Naive thymus-derived CD4-positive, alpha-beta T cell (primary cell): ENCODE measurements at regions of chr5 and their contacts with region 1.

Region 1: DNA sequence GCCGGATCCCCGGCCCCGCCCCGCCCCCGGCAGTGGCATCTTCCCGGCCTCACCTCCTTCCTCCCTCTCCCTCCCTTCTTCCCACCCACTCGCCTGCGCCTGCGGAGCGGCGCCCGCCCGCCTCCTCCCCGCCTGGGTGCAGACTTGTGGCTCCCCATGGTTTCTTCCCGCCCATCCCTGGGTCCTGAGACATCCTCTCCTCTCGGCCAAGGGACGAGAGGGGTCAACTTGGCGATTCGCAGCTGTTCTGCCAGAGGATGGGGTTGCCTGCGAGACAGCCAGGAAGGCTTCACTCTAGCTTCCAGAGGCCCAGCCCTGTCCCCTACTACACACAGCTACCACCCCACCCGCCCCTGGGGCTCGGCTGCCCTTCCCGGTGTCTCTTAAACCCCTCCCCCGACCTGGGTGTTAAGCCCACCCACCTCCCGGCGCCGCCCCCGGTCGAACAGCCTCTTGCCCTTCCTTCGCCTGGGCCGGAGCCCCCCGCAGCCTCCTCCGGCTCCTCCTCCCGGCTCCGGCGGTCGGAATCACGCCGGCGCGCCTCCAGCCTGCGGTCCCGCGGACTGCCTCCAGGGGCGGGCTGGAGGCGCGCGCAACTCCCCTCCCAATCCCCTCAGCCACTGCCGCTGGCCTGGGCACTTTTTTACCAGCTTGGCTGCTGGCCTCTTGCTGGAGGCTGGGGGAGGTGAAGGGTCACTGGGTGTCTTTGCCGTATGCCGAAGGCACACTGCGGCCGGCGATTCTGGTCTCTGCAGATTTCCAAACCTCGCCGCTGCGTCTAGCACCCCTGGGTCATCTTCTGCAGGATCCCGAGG is 1.9 kb downstream of the JADE2 start:
- DNase-seq: peak; percentile 34 to 82 (median 60)
- ATAC-seq: peak; percentile 45
- H3K4me3 ChIP-seq: peak overlapping the region; percentile 100
- H3K4me3 Mint-ChIP-seq: peak overlapping the region; percentile 91 to 100 (median 98)
- H3K27ac ChIP-seq: peak overlapping the region; percentile 97
- H3K27ac Mint-ChIP-seq: peak overlapping the region; percentile 48 to 99 (median 93)
- H3K4me1 ChIP-seq: peaks cover 43 to 50% of the 10 kb centered on the region in 2 donors
- H3K4me1 Mint-ChIP-seq: peaks cover 37 to 57% (median 52%) of the 10 kb centered on the region in 7 donors
- H3K27me3 ChIP-seq: no peaks in the 10 kb centered on the region
- H3K27me3 Mint-ChIP-seq: no peaks in the 10 kb centered on the region

Region 2: DNA sequence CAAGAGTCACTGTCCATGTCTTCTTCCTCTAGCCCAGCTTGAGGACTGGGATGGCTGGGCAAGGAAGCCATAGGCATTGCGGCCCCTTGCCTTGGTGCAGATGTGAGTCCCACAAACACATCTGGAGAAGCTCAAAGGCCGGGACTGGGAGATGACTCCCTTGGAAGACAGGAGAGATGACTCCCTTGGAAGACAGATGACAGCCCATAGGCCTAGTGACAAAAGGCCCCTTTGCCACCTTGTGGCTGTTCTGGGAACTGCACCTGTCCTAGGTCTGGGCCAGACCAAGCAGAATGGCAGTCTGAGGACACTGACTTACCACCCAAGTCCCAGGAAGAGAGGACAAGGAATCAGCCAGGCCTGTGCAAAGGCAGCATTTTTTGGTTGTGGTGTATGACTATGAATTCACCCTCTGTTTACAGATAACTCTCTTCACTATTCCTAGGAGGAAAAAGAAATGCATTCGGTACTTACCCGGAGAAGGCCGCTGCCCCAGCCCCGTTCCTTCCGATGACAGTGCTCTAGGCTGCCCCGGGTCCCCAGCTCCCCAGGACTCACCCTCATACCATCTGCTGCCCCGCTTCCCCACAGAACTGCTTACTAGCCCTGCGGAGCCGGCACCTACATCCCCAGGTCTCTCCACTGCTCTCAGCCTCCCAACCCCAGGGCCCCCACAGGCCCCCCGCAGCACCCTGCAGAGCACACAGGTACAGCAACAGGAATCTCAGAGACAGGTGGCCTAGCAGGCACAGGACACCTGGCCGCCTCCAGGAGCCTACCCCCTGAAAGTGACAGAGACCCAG is 381.4 kb before region 1 on chr5:
- CTCF ChIA-PET with region 1: no interaction called
- POLR2A ChIA-PET with region 1: no interaction called
- intact Hi-C with region 1: no loop called
- DNase-seq: peak; percentile 64 to 87 (median 77)
- ATAC-seq: peak; percentile 84
- H3K4me3 ChIP-seq: no peak overlapping the region
- H3K4me3 Mint-ChIP-seq: peak overlapping the region in 4 of 10 donors; percentile 18 to 54 (median 27)
- H3K27ac ChIP-seq: peak overlapping the region; percentile 63
- H3K27ac Mint-ChIP-seq: peak overlapping the region in 8 of 9 donors; percentile 75 to 93 (median 90)
- H3K4me1 ChIP-seq: peaks cover 5 to 29% of the 10 kb centered on the region in 2 donors
- H3K4me1 Mint-ChIP-seq: peaks cover 21 to 67% (median 46%) of the 10 kb centered on the region in 7 donors
- H3K27me3 ChIP-seq: no peaks in the 10 kb centered on the region
- H3K27me3 Mint-ChIP-seq: no peaks in the 10 kb centered on the region

Region 3: GRCh38 chr5:134225618-134226440 is 301.5 kb before region 1 on chr5 and contains the start of gene PPP2CA:
- CTCF ChIA-PET with region 1: no interaction called
- POLR2A ChIA-PET with region 1: interaction called, 13 read pairs
- intact Hi-C with region 1: loop called (anchors 1 kb)
- DNase-seq: peak; percentile 98 to 100 (median 99)
- ATAC-seq: peak; percentile 89
- H3K4me3 ChIP-seq: peak within 1 kb of the TSS; percentile 100
- H3K4me3 Mint-ChIP-seq: peak within 1 kb of the TSS; percentile 66 to 98 (median 96)
- H3K27ac ChIP-seq: peak within 1 kb of the TSS; percentile 100
- H3K27ac Mint-ChIP-seq: peak within 1 kb of the TSS; percentile 95 to 100 (median 98)
- H3K4me1 ChIP-seq: peaks cover 29 to 40% of the 10 kb centered on the region in 2 donors
- H3K4me1 Mint-ChIP-seq: peaks cover 37 to 58% (median 52%) of the 10 kb centered on the region in 7 donors
- H3K27me3 ChIP-seq: no peaks in the 10 kb centered on the region
- H3K27me3 Mint-ChIP-seq: peaks cover 0 to 4% (median 0%) of the 10 kb centered on the region in 5 donors
- total RNA-seq, gene PPP2CA: 89.5 to 168 (median 132) TPM

Region 4: GRCh38 chr5:134249469-134250379 is 277.6 kb before region 1 on chr5:
- CTCF ChIA-PET with region 1: no interaction called
- POLR2A ChIA-PET with region 1: no interaction called
- intact Hi-C with region 1: no loop called
- DNase-seq: no peak
- ATAC-seq: peak; percentile 86
- H3K4me3 ChIP-seq: no peak overlapping the region
- H3K4me3 Mint-ChIP-seq: no peak overlapping the region
- H3K27ac ChIP-seq: no peak overlapping the region
- H3K27ac Mint-ChIP-seq: no peak overlapping the region
- H3K4me1 ChIP-seq: no peaks in the 10 kb centered on the region
- H3K4me1 Mint-ChIP-seq: peaks cover 0 to 7% (median 0%) of the 10 kb centered on the region in 7 donors
- H3K27me3 ChIP-seq: no peaks in the 10 kb centered on the region
- H3K27me3 Mint-ChIP-seq: peaks cover 0 to 13% (median 4%) of the 10 kb centered on the region in 5 donors

Region 5: DNA sequence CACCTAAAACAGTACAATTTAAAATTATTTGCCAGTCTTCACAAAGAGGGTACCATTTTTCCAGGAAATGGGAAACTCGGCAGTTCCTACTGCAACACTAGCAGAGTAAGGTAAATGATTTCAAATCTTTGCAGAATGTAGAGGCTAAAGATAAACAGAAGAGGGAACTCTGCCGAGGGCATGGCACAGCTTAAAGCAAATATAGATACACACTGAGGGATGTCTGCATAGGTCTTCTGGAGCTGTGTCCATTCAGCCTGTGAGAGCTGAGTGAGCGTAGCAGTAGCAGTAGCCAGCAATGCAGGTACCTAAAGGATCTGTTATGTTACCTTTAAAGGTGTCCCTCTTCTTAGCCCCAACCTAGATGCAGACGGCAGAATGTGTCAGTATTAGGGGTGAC is 177.9 kb before region 1 on chr5:
- CTCF ChIA-PET with region 1: no interaction called
- POLR2A ChIA-PET with region 1: no interaction called
- intact Hi-C with region 1: no loop called
- DNase-seq: no peak
- ATAC-seq: no peak
- H3K4me3 ChIP-seq: no peak overlapping the region
- H3K4me3 Mint-ChIP-seq: no peak overlapping the region
- H3K27ac ChIP-seq: no peak overlapping the region
- H3K27ac Mint-ChIP-seq: no peak overlapping the region
- H3K4me1 ChIP-seq: no peaks in the 10 kb centered on the region
- H3K4me1 Mint-ChIP-seq: peaks cover 0 to 2% (median 0%) of the 10 kb centered on the region in 7 donors
- H3K27me3 ChIP-seq: no peaks in the 10 kb centered on the region
- H3K27me3 Mint-ChIP-seq: no peaks in the 10 kb centered on the region

Region 6: DNA sequence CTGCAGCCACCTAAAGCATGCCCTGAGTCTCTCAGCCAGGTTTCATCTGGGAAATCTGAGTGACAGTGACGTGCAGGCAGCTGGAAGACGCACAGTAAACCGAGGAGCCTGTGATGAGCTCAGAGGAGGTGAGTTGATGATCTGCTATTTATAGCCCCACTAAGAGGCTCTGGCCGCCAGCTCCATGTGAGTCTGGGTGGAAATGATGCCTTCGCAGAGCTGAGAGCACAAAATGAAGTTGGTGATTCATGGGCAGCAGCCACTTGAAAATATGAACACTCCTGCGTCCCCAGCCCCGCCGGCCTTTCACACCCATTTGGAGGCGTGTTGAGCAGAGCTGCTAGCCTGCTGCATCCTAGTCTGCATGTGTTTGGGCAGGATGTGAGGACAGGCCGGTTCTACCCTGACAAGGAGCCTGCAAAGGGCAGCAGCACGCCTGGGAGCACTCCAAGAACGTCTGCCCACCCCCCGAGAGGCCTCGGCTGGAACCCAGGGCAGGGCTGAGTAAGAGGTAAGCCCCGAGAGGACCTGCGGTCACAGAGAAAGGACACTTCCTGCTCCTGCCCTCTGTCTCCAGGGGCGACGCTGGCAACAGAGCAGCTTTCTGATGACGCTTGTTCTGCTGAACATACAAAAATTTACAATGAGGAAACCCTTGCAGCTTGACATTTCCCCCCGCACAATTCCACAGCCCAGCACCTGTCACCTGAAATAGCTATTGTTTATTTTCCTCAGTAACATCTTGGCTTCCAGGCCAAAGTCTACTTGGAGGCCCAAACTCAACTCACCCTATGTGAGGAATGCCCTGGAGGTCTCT is 90.6 kb before region 1 on chr5:
- CTCF ChIA-PET with region 1: no interaction called
- POLR2A ChIA-PET with region 1: interaction called, 5 read pairs
- intact Hi-C with region 1: loop called (anchors 1 kb)
- DNase-seq: peak; percentile 29 to 65 (median 50)
- ATAC-seq: peak; percentile 92
- H3K4me3 ChIP-seq: peak overlapping the region; percentile 24
- H3K4me3 Mint-ChIP-seq: peak overlapping the region in 9 of 10 donors; percentile 20 to 65 (median 51)
- H3K27ac ChIP-seq: no peak overlapping the region
- H3K27ac Mint-ChIP-seq: peak overlapping the region; percentile 47 to 85 (median 74)
- H3K4me1 ChIP-seq: peaks cover 0 to 11% of the 10 kb centered on the region in 2 donors
- H3K4me1 Mint-ChIP-seq: peaks cover 0 to 31% (median 14%) of the 10 kb centered on the region in 7 donors
- H3K27me3 ChIP-seq: no peaks in the 10 kb centered on the region
- H3K27me3 Mint-ChIP-seq: no peaks in the 10 kb centered on the region

Region 7: DNA sequence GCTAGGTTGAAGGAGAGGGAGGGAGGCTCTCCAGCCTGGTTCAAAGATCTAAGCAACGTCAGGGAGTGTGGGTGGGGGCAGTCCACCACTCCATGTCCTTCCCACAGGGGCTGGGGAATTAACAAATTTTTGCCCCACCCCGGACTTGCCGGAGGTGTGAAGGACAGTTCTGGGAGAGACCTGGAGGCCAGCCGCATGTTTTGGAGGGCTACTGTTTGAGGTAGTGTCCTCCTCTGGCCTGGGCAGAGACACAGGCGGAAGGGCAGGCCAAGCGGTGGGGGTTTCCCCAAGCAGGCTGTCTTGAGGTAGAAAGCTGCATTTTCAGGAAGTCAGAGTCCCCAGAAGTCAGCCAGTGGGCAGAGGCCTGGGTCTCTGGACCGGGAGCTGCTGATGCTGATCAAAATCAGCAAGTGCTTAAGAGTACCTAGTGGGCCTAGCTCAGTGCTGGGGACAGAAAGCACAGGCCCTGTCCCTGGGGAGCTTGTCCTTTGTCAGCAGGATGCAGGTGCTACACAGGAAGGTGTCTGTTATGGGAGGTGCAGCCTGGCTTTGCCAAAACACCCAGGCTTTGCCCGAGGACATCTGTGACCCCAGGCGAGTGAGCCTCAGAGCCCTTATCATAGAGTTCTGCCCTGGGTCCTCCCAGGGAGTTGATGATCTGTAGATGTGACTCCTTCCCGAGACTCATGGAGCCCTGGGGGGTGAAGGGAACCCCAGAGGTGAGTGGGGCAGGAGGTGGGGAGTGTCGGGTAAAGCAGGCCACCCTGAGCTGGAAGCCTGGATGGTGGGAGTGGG is 16.7 kb after region 1 on chr5:
- CTCF ChIA-PET with region 1: interaction called, 8 read pairs
- POLR2A ChIA-PET with region 1: interaction called, 11 read pairs
- intact Hi-C with region 1: loop called (anchors 1 kb)
- DNase-seq: peak in 2 of 9 donors; percentile 12 to 61
- ATAC-seq: peak; percentile 80
- H3K4me3 ChIP-seq: no peak overlapping the region
- H3K4me3 Mint-ChIP-seq: peak overlapping the region; percentile 19 to 80 (median 70)
- H3K27ac ChIP-seq: peak overlapping the region; percentile 62
- H3K27ac Mint-ChIP-seq: peak overlapping the region; percentile 73 to 93 (median 86)
- H3K4me1 ChIP-seq: peaks cover 30 to 38% of the 10 kb centered on the region in 2 donors
- H3K4me1 Mint-ChIP-seq: peaks cover 26 to 68% (median 53%) of the 10 kb centered on the region in 7 donors
- H3K27me3 ChIP-seq: no peaks in the 10 kb centered on the region
- H3K27me3 Mint-ChIP-seq: no peaks in the 10 kb centered on the region

Region 8: DNA sequence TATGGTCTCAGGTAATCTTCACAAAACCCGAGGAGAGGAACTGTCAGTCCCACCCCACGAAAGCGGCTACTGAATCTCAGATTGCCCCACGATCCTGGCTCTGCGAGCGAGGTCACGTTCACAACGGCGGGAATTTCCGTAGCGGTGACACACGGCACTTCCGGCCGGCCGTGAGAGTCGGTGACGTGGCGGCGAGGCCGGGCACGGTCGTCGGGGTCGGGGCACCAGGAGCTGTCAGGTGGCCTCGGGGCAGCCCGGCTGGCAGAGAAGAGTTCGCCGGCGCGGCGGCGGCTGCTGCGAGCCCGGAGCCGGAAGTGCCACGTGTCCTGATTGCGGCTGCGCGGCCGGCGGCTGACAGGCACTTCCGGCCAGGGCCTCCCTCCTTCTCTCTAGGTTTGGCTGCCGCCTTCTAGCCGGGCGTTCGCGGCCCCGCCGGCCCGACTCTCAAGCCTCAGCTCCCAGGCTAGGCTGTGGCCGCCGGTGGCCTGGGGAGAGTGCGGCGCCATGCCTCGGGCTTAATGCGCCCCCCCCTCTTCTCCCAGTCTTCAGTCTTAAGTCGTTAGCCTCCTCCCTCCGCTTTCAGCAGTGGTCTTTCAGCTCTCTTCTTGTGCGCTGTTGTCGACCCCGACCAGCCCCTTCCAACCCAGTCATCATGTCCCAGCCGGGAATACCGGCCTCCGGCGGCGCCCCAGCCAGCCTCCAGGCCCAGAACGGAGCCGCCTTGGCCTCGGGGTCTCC is 121.2 kb after region 1 on chr5 and contains the start of gene SEC24A:
- CTCF ChIA-PET with region 1: no interaction called
- POLR2A ChIA-PET with region 1: no interaction called
- intact Hi-C with region 1: loop called (anchors 1 kb)
- DNase-seq: peak; percentile 83 to 93 (median 86)
- ATAC-seq: peak; percentile 92
- H3K4me3 ChIP-seq: peak within 1 kb of the TSS; percentile 76
- H3K4me3 Mint-ChIP-seq: peak within 1 kb of the TSS; percentile 89 to 100 (median 98)
- H3K27ac ChIP-seq: peak within 1 kb of the TSS; percentile 91
- H3K27ac Mint-ChIP-seq: peak within 1 kb of the TSS; percentile 94 to 100 (median 99)
- H3K4me1 ChIP-seq: peaks cover 7 to 9% of the 10 kb centered on the region in 2 donors
- H3K4me1 Mint-ChIP-seq: peaks cover 13 to 40% (median 26%) of the 10 kb centered on the region in 7 donors
- H3K27me3 ChIP-seq: no peaks in the 10 kb centered on the region
- H3K27me3 Mint-ChIP-seq: no peaks in the 10 kb centered on the region
- total RNA-seq, gene SEC24A: 13.6 to 30.9 (median 16.0) TPM

Region 9: GRCh38 chr5:134784241-134784920 is 257.0 kb after region 1 on chr5:
- CTCF ChIA-PET with region 1: no interaction called
- POLR2A ChIA-PET with region 1: no interaction called
- intact Hi-C with region 1: no loop called
- DNase-seq: peak in 5 of 9 donors; percentile 1 to 28 (median 21)
- ATAC-seq: no peak
- H3K4me3 ChIP-seq: no peak overlapping the region
- H3K4me3 Mint-ChIP-seq: no peak overlapping the region
- H3K27ac ChIP-seq: no peak overlapping the region
- H3K27ac Mint-ChIP-seq: peak overlapping the region in 4 of 9 donors; percentile 14 to 31 (median 24)
- H3K4me1 ChIP-seq: no peaks in the 10 kb centered on the region
- H3K4me1 Mint-ChIP-seq: peaks cover 0 to 3% (median 0%) of the 10 kb centered on the region in 7 donors
- H3K27me3 ChIP-seq: no peaks in the 10 kb centered on the region
- H3K27me3 Mint-ChIP-seq: no peaks in the 10 kb centered on the region

Region 10: DNA sequence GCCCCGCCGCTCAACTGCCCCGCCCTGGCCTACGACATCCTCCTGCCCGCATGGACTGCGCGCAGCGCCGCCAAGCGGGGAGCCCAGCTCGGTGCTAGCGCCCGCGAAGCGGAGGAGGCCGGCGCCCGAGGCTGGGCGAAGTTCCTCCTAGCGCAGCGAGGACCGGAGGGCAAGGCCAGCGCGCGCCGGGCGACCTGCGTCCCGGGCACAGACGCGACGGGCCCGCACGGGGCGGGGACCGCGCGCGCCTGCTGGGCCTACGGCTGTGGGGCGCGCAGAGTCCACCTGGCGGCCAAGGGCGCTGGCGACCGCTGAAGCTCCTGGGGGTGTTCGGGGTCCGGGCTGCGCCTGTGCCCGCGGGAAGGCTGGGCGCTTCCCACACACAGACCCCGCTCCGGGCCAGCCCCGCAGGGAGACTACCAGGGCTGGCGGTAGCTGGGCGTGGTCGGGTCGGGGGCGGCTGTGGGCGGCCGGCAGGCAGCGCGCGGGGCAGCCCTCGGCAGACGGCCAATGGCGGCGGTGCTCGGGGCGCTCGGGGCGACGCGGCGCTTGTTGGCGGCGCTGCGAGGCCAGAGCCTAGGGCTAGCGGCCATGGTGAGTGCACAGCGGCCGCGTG is 377.4 kb after region 1 on chr5 and contains the start of gene PCBD2:
- CTCF ChIA-PET with region 1: no interaction called
- POLR2A ChIA-PET with region 1: no interaction called
- intact Hi-C with region 1: loop called in 1 of 2 experiments (anchors 5 kb)
- DNase-seq: peak; percentile 83 to 96 (median 90)
- ATAC-seq: peak; percentile 94
- H3K4me3 ChIP-seq: peak within 1 kb of the TSS; percentile 71
- H3K4me3 Mint-ChIP-seq: peak within 1 kb of the TSS; percentile 90 to 99 (median 96)
- H3K27ac ChIP-seq: peak within 1 kb of the TSS; percentile 90
- H3K27ac Mint-ChIP-seq: peak within 1 kb of the TSS; percentile 93 to 100 (median 99)
- H3K4me1 ChIP-seq: no peaks in the 10 kb centered on the region
- H3K4me1 Mint-ChIP-seq: peaks cover 0 to 25% (median 5%) of the 10 kb centered on the region in 7 donors
- H3K27me3 ChIP-seq: no peaks in the 10 kb centered on the region
- H3K27me3 Mint-ChIP-seq: no peaks in the 10 kb centered on the region
- total RNA-seq, gene PCBD2: 10.6 to 15.8 (median 14.3) TPM